ENCODE measurements at regions of chr1 and their contacts with region 1.

Region 1: GRCh38 chr1:65067491-65068201 is 80.4 kb upstream of the AK4 start:
- DNase-seq: peak; percentile 50 to 84 (median 74)
- H3K4me3 ChIP-seq: peak overlapping the region; percentile 55 to 100 (median 92)
- H3K27ac ChIP-seq: peak overlapping the region; percentile 95 to 100 (median 100)
- H3K27me3 ChIP-seq: no peaks in the 10 kb centered on the region
- CTCF ChIP-seq: peak in 8 of 56 donors; percentile 7 to 24 (median 16)

Region 2: GRCh38 chr1:64744492-64745180 is 323.0 kb before region 1 on chr1 and contains the start of gene RAVER2:
- intact Hi-C with region 1: loop called in 1 of 2 experiments (anchors 10 kb)
- DNase-seq: peak in 7 of 10 donors; percentile 34 to 67 (median 57)
- H3K4me3 ChIP-seq: peak within 1 kb of the TSS; percentile 56 to 87 (median 76)
- H3K27ac ChIP-seq: peak within 1 kb of the TSS in 54 of 59 donors; percentile 30 to 91 (median 76)
- H3K27me3 ChIP-seq: no peaks in the 10 kb centered on the region
- CTCF ChIP-seq: peak in 47 of 56 donors; percentile 7 to 56 (median 33)
- total RNA-seq, gene RAVER2: 6.1 to 24.9 (median 12.8) TPM

Region 3: GRCh38 chr1:65002508-65003315 is 64.9 kb before region 1 on chr1:
- intact Hi-C with region 1: loop called (anchors 2 to 5 kb)
- DNase-seq: peak; percentile 49 to 89 (median 73)
- H3K4me3 ChIP-seq: peak overlapping the region; percentile 54 to 81 (median 67)
- H3K27ac ChIP-seq: peak overlapping the region in 58 of 59 donors; percentile 3 to 96 (median 86)
- H3K27me3 ChIP-seq: no peaks in the 10 kb centered on the region
- CTCF ChIP-seq: peak in 2 of 56 donors; percentile 14 to 17

Region 4: GRCh38 chr1:65419681-65420589 is 352.3 kb after region 1 on chr1:
- intact Hi-C with region 1: loop called in 1 of 2 experiments (anchors 10 kb)
- DNase-seq: peak; percentile 89 to 98 (median 94)
- H3K4me3 ChIP-seq: peak overlapping the region; percentile 59 to 99 (median 90)
- H3K27ac ChIP-seq: peak overlapping the region; percentile 69 to 100 (median 97)
- H3K27me3 ChIP-seq: no peaks in the 10 kb centered on the region
- CTCF ChIP-seq: peak in 4 of 56 donors; percentile 7 to 27 (median 10)

Region 5: GRCh38 chr1:66924756-66925557 is 1857.3 kb after region 1 on chr1 and contains the starts of genes DNAI4 and MIER1:
- intact Hi-C with region 1: loop called in 1 of 2 experiments (anchors 10 kb)
- DNase-seq: peak; percentile 91 to 98 (median 96)
- H3K4me3 ChIP-seq: peak within 1 kb of the TSS; percentile 63 to 98 (median 89)
- H3K27ac ChIP-seq: peak within 1 kb of the TSS; percentile 87 to 99 (median 97)
- H3K27me3 ChIP-seq: no peaks in the 10 kb centered on the region
- CTCF ChIP-seq: peak in 47 of 56 donors; percentile 5 to 65 (median 47)
- total RNA-seq, gene DNAI4: 17.6 to 69.1 (median 35.3) TPM
- total RNA-seq, gene MIER1: 25.1 to 40.5 (median 32.1) TPM

Measured in dorsolateral prefrontal cortex (tissue), 120 donors.